PC-9 (cell line): ENCODE measurements at regions of chr20 and their contacts with region 1.

Region 1: DNA sequence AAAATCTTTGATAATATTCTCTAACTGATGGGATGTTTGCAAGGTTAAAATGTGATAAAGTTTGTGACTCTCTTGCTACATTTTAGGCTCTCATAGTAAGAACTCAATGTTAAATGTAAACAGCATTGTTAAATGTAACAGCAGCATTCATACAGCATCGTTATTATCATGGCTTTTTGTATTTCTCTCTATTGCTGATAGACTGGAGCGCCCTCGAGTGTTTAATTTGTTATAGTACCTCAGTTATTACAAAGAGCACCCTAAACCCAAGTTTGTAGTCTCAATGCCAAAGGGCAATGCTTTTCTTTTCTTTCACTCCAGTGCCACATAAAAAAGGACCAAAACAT is 14.9 kb upstream of the TTPAL start:
- DNase-seq: peak in 1 of 2 experiments; percentile 23
- H3K4me3 ChIP-seq: no peak overlapping the region
- H3K27ac ChIP-seq: no peak overlapping the region
- H3K4me1 ChIP-seq: no peaks in the 10 kb centered on the region
- H3K27me3 ChIP-seq: no peaks in the 10 kb centered on the region
- CTCF ChIP-seq: peak; percentile 78

Region 2: DNA sequence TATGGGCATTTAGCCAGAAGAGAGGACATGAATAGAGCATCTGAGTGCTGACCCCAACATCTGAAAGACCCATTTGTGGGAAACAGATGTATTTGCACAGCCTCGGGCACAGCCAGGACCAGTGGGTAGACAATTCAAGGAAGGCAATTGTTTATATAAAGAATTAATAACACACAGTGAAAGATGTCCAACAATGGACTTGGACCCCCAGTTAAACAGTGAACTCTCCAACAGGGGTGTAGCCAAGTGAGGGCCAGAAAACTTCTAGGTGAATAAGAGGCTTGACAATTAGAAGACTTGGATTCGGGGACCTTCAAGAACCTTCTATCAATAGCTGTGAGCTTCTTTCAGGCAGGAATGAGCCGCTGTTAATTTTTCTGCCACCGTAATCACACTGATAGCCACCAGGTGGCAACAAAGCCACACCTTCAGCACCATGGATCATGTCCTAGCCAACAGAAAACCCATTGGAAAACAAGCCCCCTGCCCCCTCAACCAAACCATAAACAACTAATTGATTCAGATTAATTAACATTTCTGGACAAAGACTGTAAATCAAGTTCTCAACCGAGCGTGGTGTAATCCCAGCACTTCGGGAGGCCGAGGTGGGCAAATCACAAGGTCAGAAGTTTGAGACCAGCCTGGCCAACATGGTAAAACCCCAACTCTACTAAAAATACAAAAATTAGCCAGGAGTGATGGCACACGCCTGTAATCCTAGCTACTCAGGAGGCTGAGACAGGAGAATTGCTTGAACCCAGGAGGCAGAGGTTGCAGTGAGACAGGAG is 1011.8 kb before region 1 on chr20:
- CTCF ChIA-PET with region 1: no interaction called
- POLR2A ChIA-PET with region 1: no interaction called
- intact Hi-C with region 1: loop called (anchors 10 kb)
- DNase-seq: peak in 1 of 2 experiments; percentile 59
- H3K4me3 ChIP-seq: no peak overlapping the region
- H3K27ac ChIP-seq: no peak overlapping the region
- H3K4me1 ChIP-seq: no peaks in the 10 kb centered on the region
- H3K27me3 ChIP-seq: peaks cover 5% of the 10 kb centered on the region
- CTCF ChIP-seq: peak; percentile 92

Region 3: DNA sequence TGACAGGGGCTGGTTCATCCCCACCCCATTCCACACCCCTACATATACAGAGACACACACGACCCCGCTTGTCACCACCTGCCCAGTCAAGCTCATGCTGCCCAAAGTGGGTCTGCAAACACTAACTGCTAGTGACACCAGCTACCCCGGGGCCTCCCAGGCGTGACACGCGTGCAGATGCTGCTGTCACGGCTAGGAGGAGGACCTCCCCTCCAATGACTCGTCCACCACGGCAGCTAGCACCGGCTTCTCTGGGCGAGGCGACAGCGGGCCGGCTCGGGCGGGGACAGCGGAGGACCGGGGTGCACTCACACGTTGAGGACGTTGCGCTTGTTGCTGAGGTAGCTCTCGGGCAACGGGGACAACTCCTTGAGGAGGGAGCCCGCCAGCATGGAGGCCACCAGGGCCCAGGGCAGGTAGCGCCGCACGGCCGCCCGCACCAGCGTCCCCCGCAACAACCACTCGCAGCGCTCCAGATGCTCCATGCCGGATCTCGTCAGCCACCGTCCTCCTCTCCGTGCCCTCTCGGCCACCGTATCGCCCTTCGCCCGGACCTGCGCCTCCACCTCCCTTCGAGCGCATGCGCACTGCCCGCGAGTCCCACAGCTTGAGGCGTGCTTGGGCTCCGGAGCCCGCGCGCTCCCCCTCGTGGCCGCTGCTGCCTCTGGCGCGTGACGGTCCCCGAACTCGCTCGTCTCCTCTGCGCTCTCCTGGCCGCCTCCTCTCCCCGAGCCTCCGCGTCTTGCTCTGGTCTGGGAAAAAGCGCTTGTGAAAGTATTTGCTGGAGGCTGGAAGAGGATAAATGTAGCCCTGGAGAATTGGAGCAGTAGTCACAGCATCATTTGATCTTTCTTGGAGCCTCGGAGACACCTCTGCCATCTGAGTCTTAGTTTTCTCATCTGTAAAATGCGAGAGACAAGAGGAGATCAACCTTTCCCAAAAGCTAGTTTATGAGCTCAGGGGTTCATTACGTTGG is 149.8 kb before region 1 on chr20 and contains the start of gene FITM2:
- CTCF ChIA-PET with region 1: no interaction called
- POLR2A ChIA-PET with region 1: no interaction called
- intact Hi-C with region 1: loop called (anchors 10 kb)
- DNase-seq: peak; percentile 86 to 98
- H3K4me3 ChIP-seq: peak within 1 kb of the TSS; percentile 69
- H3K27ac ChIP-seq: no peak within 1 kb of the TSS
- H3K4me1 ChIP-seq: peaks cover 10% of the 10 kb centered on the region
- H3K27me3 ChIP-seq: no peaks in the 10 kb centered on the region
- CTCF ChIP-seq: peak; percentile 94
- total RNA-seq, gene FITM2: 6.1 and 7.4 TPM in 2 replicates

Region 4: GRCh38 chr20:44702776-44703175 is 242.0 kb after region 1 on chr20:
- CTCF ChIA-PET with region 1: no interaction called
- POLR2A ChIA-PET with region 1: no interaction called
- intact Hi-C with region 1: no loop called
- DNase-seq: no peak
- H3K4me3 ChIP-seq: no peak overlapping the region
- H3K27ac ChIP-seq: no peak overlapping the region
- H3K4me1 ChIP-seq: peaks cover 9% of the 10 kb centered on the region
- H3K27me3 ChIP-seq: no peaks in the 10 kb centered on the region
- CTCF ChIP-seq: no peak

Region 5: DNA sequence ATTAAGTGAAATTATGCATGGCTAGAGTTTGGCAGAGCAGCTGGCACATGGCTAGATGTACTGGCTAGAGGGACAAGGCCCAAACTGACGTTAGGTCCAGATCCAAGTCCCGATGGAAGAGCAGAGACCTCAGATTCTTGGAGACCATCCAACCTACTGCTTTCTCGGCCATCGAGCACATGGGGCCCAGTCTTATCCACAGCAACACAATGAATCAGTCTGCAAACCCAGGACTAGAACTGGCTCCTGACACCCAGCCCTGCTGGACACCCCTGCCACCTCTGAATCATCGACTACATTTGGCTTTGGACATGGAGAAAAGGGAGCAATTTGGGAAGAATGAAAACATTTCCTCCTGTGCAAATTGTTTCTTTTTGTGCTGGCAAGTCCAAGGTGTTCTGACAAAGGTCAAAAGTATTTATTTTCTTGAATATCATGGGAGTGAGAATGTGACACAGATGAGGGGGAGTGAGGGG is 400.8 kb after region 1 on chr20:
- CTCF ChIA-PET with region 1: no interaction called
- POLR2A ChIA-PET with region 1: no interaction called
- intact Hi-C with region 1: loop called (anchors 10 kb)
- DNase-seq: peak in 1 of 2 experiments; percentile 39
- H3K4me3 ChIP-seq: no peak overlapping the region
- H3K27ac ChIP-seq: no peak overlapping the region
- H3K4me1 ChIP-seq: peaks cover 8% of the 10 kb centered on the region
- H3K27me3 ChIP-seq: 0 out of 2 replicates have a peak, but pooled peaks cover 2% of the 10 kb centered on the region
- CTCF ChIP-seq: no peak